ENCODE measurements at regions of chr6 and their contacts with region 1.

Region 1: DNA sequence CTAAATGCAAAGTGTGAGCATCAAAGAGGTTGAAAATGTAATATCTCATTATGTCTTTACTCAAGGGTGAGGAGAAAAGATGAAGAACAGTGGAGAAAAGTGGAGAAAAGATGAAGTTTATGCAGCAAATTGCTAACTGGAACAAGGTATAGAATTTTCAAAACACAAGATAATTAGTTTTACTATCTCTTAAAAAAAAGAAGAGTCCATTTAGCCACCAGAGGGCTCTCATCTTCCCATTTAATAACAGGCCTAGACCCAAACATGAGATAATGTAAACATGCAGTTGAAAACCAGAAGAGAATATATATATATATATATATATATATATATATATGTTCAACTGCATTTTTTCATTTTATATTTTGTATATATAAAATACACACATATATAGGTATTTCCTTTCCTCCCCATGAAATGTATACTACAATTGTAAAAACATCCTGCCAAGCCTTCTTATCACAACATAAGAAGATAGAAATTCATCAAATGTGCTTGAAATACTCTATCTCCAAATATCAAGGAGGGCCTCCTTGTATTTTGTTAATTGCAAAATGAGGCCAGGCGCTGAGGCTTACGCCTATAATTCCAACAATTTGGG is 78.4 kb downstream of the ADTRP start:
- DNase-seq: peak in 2 of 9 experiments; percentile 49 to 64
- ATAC-seq: no peak
- H3K4me3 ChIP-seq: no peak overlapping the region
- H3K4me3 Mint-ChIP-seq: no peak overlapping the region
- H3K27ac ChIP-seq: no peak overlapping the region
- H3K27ac Mint-ChIP-seq: no peak overlapping the region
- H3K4me1 ChIP-seq: no peaks in the 10 kb centered on the region
- H3K4me1 Mint-ChIP-seq: peaks cover 12% of the 10 kb centered on the region
- H3K27me3 ChIP-seq: peaks cover 0 to 2% of the 10 kb centered on the region in 2 experiments
- H3K27me3 Mint-ChIP-seq: no peaks in the 10 kb centered on the region
- CTCF ChIP-seq: peak; percentile 49

Region 2: GRCh38 chr6:11750682-11751081 is 50.5 kb after region 1 on chr6:
- CTCF ChIA-PET with region 1: interaction called, 4 read pairs
- POLR2A ChIA-PET with region 1: no interaction called
- intact Hi-C with region 1: loop called in 1 of 2 experiments (anchors 1 kb)
- DNase-seq: no peak
- ATAC-seq: no peak
- H3K4me3 ChIP-seq: no peak overlapping the region
- H3K4me3 Mint-ChIP-seq: no peak overlapping the region
- H3K27ac ChIP-seq: no peak overlapping the region
- H3K27ac Mint-ChIP-seq: no peak overlapping the region
- H3K4me1 ChIP-seq: no peaks in the 10 kb centered on the region
- H3K4me1 Mint-ChIP-seq: no peaks in the 10 kb centered on the region
- H3K27me3 ChIP-seq: no peaks in the 10 kb centered on the region
- H3K27me3 Mint-ChIP-seq: no peaks in the 10 kb centered on the region
- CTCF ChIP-seq: no peak

Region 3: DNA sequence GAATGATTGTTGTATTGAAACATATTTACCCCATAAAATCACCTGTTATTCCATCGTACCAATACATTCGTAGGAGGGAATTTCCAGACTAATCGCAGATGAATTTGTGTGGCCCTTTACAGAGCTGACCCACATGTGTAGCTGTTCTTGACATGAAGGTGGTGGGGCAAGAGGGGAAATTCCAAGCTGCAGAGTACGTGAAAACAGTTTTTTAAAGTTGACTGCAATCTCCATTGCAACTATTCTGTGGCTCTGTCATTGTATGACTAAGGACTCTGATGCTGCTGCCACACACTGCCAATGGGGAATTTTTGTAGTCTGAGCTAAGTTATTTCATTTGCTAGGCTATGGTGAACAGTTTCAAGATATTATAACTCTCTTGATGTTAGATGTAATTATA is 124.8 kb after region 1 on chr6:
- CTCF ChIA-PET with region 1: no interaction called
- POLR2A ChIA-PET with region 1: no interaction called
- intact Hi-C with region 1: loop called in 1 of 2 experiments (anchors 5 kb)
- DNase-seq: peak in 1 of 9 experiments; percentile 27
- ATAC-seq: no peak
- H3K4me3 ChIP-seq: no peak overlapping the region
- H3K4me3 Mint-ChIP-seq: no peak overlapping the region
- H3K27ac ChIP-seq: no peak overlapping the region
- H3K27ac Mint-ChIP-seq: no peak overlapping the region
- H3K4me1 ChIP-seq: no peaks in the 10 kb centered on the region
- H3K4me1 Mint-ChIP-seq: peaks cover 3% of the 10 kb centered on the region
- H3K27me3 ChIP-seq: no peaks in the 10 kb centered on the region
- H3K27me3 Mint-ChIP-seq: peaks cover 2% of the 10 kb centered on the region
- CTCF ChIP-seq: no peak

Region 4: GRCh38 chr6:12075067-12075563 is 374.9 kb after region 1 on chr6:
- CTCF ChIA-PET with region 1: interaction called, 4 read pairs
- POLR2A ChIA-PET with region 1: no interaction called
- intact Hi-C with region 1: loop called (anchors 1 kb)
- DNase-seq: peak in 3 of 9 experiments; percentile 21 to 51 (median 36)
- ATAC-seq: peak; percentile 73
- H3K4me3 ChIP-seq: no peak overlapping the region
- H3K4me3 Mint-ChIP-seq: no peak overlapping the region
- H3K27ac ChIP-seq: no peak overlapping the region
- H3K27ac Mint-ChIP-seq: no peak overlapping the region
- H3K4me1 ChIP-seq: peaks cover 13% of the 10 kb centered on the region
- H3K4me1 Mint-ChIP-seq: peaks cover 48% of the 10 kb centered on the region
- H3K27me3 ChIP-seq: no peaks in the 10 kb centered on the region
- H3K27me3 Mint-ChIP-seq: no peaks in the 10 kb centered on the region
- CTCF ChIP-seq: peak; percentile 54

Region 5: GRCh38 chr6:12090714-12091113 is 390.5 kb after region 1 on chr6:
- CTCF ChIA-PET with region 1: no interaction called
- POLR2A ChIA-PET with region 1: no interaction called
- intact Hi-C with region 1: no loop called
- DNase-seq: no peak
- ATAC-seq: no peak
- H3K4me3 ChIP-seq: no peak overlapping the region
- H3K4me3 Mint-ChIP-seq: no peak overlapping the region
- H3K27ac ChIP-seq: no peak overlapping the region
- H3K27ac Mint-ChIP-seq: no peak overlapping the region
- H3K4me1 ChIP-seq: no peaks in the 10 kb centered on the region
- H3K4me1 Mint-ChIP-seq: peaks cover 13% of the 10 kb centered on the region
- H3K27me3 ChIP-seq: no peaks in the 10 kb centered on the region
- H3K27me3 Mint-ChIP-seq: no peaks in the 10 kb centered on the region
- CTCF ChIP-seq: no peak

Measured in CD8-positive, alpha-beta T cell (primary cell).